ENCODE measurements at regions of chr7 and their contacts with region 1.

Region 1: DNA sequence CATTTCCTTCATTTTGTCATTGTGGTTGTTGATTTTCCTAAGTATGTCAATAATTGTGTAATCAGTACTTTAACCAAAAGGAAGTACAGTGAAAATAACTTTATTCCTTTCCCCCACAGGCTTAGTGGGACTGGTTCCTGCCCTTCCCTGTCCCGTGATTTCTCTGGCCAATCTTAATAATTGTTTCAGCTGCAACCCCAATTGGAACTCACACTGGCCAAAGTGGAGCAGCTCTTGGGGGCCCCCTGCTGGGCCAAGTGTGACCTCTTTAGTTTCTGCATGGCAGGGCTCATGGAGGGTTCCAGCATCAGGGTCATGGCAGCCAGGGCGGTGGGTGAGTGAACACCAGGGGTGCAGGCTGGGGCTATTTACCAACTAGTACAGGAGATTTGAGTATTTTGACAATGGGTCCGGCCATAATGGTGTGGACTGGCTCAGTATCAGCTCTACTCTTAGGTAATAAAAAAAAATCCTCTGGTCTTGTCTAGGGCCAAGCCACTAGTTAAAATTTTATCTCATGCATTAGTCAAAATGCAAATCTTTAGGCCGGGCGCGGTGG is 31.7 kb downstream of the CYCS start:
- DNase-seq: peak; percentile 66
- H3K4me3 Mint-ChIP-seq: no peak overlapping the region
- H3K27ac Mint-ChIP-seq: no peak overlapping the region
- H3K4me1 Mint-ChIP-seq: peaks cover 16% of the 10 kb centered on the region
- H3K27me3 Mint-ChIP-seq: peaks cover 9% of the 10 kb centered on the region

Region 2: DNA sequence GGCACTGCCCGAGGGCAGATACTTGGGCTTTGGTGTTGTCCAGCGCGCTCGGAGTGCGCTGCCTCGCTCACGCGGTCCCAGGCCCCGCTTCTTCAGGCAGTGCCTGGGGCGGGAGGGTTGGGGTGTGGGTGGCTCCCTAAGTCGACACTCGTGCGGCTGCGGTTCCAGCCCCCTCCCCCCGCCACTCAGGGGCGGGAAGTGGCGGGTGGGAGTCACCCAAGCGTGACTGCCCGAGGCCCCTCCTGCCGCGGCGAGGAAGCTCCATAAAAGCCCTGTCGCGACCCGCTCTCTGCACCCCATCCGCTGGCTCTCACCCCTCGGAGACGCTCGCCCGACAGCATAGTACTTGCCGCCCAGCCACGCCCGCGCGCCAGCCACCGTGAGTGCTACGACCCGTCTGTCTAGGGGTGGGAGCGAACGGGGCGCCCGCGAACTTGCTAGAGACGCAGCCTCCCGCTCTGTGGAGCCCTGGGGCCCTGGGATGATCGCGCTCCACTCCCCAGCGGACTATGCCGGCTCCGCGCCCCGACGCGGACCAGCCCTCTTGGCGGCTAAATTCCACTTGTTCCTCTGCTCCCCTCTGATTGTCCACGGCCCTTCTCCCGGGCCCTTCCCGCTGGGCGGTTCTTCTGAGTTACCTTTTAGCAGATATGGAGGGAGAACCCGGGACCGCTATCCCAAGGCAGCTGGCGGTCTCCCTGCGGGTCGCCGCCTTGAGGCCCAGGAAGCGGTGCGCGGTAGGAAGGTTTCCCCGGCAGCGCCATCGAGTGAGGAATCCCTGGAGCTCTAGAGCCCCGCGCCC is 809.2 kb before region 1 on chr7 and contains the start of gene NPY:
- intact Hi-C with region 1: loop called (anchors 10 kb)
- DNase-seq: no peak
- H3K4me3 Mint-ChIP-seq: peak within 1 kb of the TSS; percentile 52
- H3K27ac Mint-ChIP-seq: no peak within 1 kb of the TSS
- H3K4me1 Mint-ChIP-seq: peaks cover 2% of the 10 kb centered on the region
- H3K27me3 Mint-ChIP-seq: peaks cover 59% of the 10 kb centered on the region
- total RNA-seq, gene NPY: not detected in 2 replicates

Region 3: DNA sequence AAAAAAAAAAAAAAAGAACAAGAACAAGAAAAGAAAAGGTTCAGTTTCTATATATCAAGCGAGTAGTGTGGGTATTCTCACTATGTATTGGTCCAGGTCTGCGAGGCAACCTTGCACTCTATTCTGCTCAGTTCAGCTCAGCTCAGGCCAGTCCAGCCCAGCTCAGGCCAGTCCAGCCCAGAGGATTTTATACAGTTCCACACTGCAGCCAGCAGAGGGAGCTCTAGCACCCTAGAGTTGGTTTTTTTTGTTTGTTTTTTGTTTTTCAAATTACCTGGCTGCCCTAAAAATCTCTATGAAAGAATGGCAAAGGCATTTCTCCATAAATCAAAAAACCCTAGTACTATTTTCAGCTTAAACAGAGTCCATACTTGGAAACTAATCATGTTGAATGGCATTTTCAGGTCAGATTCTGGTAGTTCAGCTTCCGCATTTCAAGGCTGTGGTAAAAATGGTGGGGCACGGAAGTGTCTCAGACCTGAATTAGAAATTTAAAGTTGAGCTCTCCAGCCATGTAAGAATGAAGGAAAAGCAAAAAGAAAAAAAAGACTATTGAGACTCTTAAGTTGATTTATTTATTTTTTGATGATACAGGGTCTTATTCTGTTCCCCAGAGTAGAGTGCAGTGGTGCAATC is 280.9 kb before region 1 on chr7:
- intact Hi-C with region 1: loop called (anchors 1 kb)
- DNase-seq: no peak
- H3K4me3 Mint-ChIP-seq: no peak overlapping the region
- H3K27ac Mint-ChIP-seq: no peak overlapping the region
- H3K4me1 Mint-ChIP-seq: peaks cover under 1% of the 10 kb centered on the region
- H3K27me3 Mint-ChIP-seq: no peaks in the 10 kb centered on the region

Region 4: DNA sequence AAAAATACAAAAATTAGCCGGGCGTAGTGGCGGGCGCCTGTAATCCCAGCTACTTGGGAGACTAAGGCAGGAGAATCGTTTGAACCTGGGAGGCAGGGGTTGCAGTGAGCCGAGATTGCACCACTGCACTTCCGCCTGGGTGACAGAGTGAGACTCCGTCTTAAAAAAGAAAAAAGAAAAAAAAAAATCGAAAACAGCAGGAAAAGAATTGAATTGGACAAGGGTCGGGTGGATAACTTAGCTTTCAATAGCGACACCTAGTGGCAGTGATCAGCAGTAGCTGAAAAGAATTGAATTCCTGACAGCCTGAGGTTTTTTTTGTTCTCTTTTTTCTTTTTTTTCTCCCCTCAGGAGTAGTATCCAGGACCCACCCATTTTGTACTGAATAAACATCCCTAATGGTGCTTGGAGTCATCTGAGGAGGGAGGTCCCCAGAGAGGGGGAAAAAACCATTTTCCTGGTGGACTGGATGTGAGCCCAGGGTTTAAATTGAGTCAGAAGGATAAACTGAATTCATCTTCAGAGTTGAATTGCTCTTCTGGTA is 23.4 kb before region 1 on chr7:
- intact Hi-C with region 1: loop called (anchors 2 kb)
- DNase-seq: peak; percentile 20
- H3K4me3 Mint-ChIP-seq: no peak overlapping the region
- H3K27ac Mint-ChIP-seq: no peak overlapping the region
- H3K4me1 Mint-ChIP-seq: peaks cover 29% of the 10 kb centered on the region
- H3K27me3 Mint-ChIP-seq: no peaks in the 10 kb centered on the region

Region 5: GRCh38 chr7:25083201-25083600 is 10.1 kb before region 1 on chr7:
- intact Hi-C with region 1: no loop called
- DNase-seq: no peak
- H3K4me3 Mint-ChIP-seq: no peak overlapping the region
- H3K27ac Mint-ChIP-seq: no peak overlapping the region
- H3K4me1 Mint-ChIP-seq: no peaks in the 10 kb centered on the region
- H3K27me3 Mint-ChIP-seq: peaks cover 19% of the 10 kb centered on the region

Region 6: DNA sequence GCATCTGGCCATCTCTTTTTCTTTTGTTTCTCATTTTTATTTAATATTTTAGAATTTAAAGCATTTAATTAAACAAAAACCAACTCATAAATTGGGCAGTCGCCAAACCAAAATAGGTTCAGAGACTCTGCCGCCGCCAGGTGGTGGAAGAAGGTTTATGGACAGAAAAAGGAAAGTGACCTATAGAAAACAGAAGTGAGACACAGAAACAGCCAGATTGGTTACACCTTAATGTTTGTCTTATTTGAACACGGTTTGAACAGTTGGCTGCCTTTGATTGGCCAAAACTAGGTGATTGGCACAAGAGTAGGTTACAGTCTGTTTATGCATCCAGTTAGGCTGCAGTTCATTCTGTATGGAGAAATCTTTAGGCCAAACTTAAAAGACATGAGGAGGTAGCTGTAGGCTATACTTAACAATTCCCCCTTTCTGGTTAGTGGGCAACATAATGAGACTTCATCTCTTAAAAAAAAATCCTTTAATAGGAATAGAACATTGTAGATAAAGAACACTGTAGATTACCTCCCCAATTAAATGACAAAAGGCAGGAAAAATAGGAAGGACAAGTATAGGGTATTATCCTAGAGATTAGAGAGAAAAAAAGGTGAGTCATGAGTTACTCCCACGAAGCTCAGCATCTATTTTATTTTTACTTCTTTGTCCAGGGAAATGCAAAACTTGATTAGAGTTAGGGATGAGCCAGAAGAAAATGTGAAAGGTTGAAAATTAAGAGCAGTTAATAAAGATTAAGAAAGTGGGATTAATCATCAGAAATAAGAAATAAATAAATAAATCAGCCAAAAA is 55.6 kb after region 1 on chr7:
- intact Hi-C with region 1: no loop called
- DNase-seq: no peak
- H3K4me3 Mint-ChIP-seq: no peak overlapping the region
- H3K27ac Mint-ChIP-seq: no peak overlapping the region
- H3K4me1 Mint-ChIP-seq: peaks cover 18% of the 10 kb centered on the region
- H3K27me3 Mint-ChIP-seq: no peaks in the 10 kb centered on the region

Region 7: GRCh38 chr7:25359471-25360059 is 266.2 kb after region 1 on chr7:
- intact Hi-C with region 1: no loop called
- DNase-seq: no peak
- H3K4me3 Mint-ChIP-seq: no peak overlapping the region
- H3K27ac Mint-ChIP-seq: no peak overlapping the region
- H3K4me1 Mint-ChIP-seq: no peaks in the 10 kb centered on the region
- H3K27me3 Mint-ChIP-seq: peaks cover 3% of the 10 kb centered on the region